ENCODE measurements at regions of chr12 and their contacts with region 1.

Region 1: GRCh38 chr12:101414533-101415119 is 7.1 kb upstream of the ARL1 start:
- DNase-seq: no peak
- ATAC-seq: no peak
- H3K4me3 Mint-ChIP-seq: no peak overlapping the region
- H3K27ac Mint-ChIP-seq: no peak overlapping the region
- H3K4me1 Mint-ChIP-seq: no peaks in the 10 kb centered on the region
- H3K27me3 Mint-ChIP-seq: no peaks in the 10 kb centered on the region
- CTCF ChIP-seq: peak; percentile 24

Region 2: GRCh38 chr12:101480849-101481248 is 66.2 kb after region 1 on chr12:
- CTCF ChIA-PET with region 1: no interaction called
- POLR2A ChIA-PET with region 1: no interaction called
- intact Hi-C with region 1: no loop called
- DNase-seq: no peak
- ATAC-seq: no peak
- H3K4me3 Mint-ChIP-seq: no peak overlapping the region
- H3K27ac Mint-ChIP-seq: no peak overlapping the region
- H3K4me1 Mint-ChIP-seq: no peaks in the 10 kb centered on the region
- H3K27me3 Mint-ChIP-seq: peaks cover 4% of the 10 kb centered on the region
- CTCF ChIP-seq: no peak

Region 3: DNA sequence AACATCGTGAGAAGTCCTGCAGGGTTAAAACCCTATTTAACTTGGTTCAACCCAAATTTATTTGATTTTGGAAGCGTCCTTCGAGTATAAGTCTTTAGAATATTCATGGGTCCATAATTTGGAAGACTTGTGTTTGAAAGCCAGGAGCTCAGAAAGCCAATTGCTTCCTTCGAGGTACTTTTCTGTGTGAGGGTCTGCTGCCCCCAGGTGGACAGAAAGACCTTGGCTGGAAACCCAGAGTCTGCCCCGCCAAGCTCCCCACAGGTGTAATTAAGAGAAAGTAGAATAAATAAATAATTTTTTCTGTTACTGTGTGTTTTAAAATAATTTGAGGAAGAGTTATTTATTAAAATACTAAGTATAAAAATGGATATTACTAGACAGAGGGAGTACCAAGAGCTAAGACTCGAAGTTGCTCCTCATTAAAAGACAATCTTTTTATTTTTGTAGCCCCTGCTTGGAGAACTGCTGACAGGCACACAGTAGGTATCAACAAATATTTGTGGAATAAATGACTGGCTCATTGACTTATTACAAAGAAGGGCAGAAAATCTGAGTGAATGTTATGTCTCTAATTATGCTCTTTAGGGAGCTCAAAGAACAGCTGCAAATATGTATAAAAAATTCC is 1396.6 kb after region 1 on chr12:
- CTCF ChIA-PET with region 1: interaction called, 3 read pairs
- POLR2A ChIA-PET with region 1: no interaction called
- intact Hi-C with region 1: loop called (anchors 1 kb)
- DNase-seq: no peak
- ATAC-seq: no peak
- H3K4me3 Mint-ChIP-seq: no peak overlapping the region
- H3K27ac Mint-ChIP-seq: no peak overlapping the region
- H3K4me1 Mint-ChIP-seq: no peaks in the 10 kb centered on the region
- H3K27me3 Mint-ChIP-seq: peaks cover 9% of the 10 kb centered on the region
- CTCF ChIP-seq: no peak